Activated CD8-positive, alpha-beta T cell treated with anti-CD3 and anti-CD28 coated beads, Interleukin-2, amount 10 ng/mL, durations not matched to agents 7 days and 5 days (primary cell): ENCODE measurements at regions of chr20 and their contacts with region 1.

Region 1: GRCh38 chr20:49982346-49983122 is at the start of gene SNAI1:
- DNase-seq: peak; percentile 87
- ATAC-seq: peak; percentile 93
- H3K4me3 Mint-ChIP-seq: peak within 1 kb of the TSS; percentile 60
- H3K27ac Mint-ChIP-seq: peak within 1 kb of the TSS; percentile 25
- H3K4me1 Mint-ChIP-seq: peaks cover 31% of the 10 kb centered on the region
- H3K27me3 Mint-ChIP-seq: peaks cover 20% of the 10 kb centered on the region
- total RNA-seq, gene SNAI1: 0.37 to 0.47 TPM

Region 2: GRCh38 chr20:50012282-50013263 is 30.0 kb after region 1 on chr20:
- CTCF ChIA-PET with region 1: interaction called, 10 read pairs
- POLR2A ChIA-PET with region 1: no interaction called
- DNase-seq: no peak
- ATAC-seq: peak; percentile 48
- H3K4me3 Mint-ChIP-seq: no peak overlapping the region
- H3K27ac Mint-ChIP-seq: peak overlapping the region; percentile 37
- H3K4me1 Mint-ChIP-seq: peaks cover 14% of the 10 kb centered on the region
- H3K27me3 Mint-ChIP-seq: peaks cover 4% of the 10 kb centered on the region

Region 3: DNA sequence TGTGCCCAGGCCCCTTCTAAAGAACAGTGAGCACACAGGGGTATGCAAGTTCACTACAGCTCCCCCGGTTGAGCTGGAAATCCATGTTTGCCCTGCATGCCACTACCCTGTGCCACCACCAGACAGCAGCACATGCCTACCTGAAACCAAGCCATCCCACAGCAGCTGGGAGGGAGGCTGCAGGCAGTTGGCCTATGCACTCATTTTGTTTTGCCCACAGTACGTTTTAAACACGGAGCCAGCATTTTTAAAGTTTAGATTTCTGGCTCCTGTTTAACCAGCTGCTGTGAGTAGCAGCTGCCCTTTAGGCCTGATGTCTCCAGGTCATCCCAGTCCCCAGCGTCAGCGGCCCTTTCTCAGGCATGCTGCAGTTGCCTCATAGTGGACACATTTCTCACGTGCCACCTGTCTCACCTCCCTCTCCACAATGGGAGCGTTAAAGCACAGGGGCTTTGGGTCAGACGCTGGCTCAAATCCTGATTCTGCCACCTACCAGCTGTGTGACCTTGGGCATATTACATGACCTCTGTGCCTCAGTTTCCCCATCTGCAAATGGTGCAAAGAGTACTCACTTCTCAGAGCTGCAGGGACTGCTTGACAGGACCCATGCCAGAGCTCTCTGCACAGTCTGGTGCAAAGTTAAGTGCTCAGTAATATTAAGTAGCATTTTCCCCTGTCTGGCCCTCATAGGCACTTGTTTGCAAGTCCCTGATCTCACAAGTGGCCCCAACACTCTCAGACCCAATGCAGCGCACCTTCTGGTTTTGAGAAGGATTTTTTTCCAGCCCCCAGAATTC is 138.6 kb after region 1 on chr20:
- CTCF ChIA-PET with region 1: interaction called, 15 read pairs
- POLR2A ChIA-PET with region 1: no interaction called
- DNase-seq: peak; percentile 70
- ATAC-seq: peak; percentile 68
- H3K4me3 Mint-ChIP-seq: no peak overlapping the region
- H3K27ac Mint-ChIP-seq: no peak overlapping the region
- H3K4me1 Mint-ChIP-seq: peaks cover 7% of the 10 kb centered on the region
- H3K27me3 Mint-ChIP-seq: no peaks in the 10 kb centered on the region

Region 4: GRCh38 chr20:50172347-50173013 is 189.9 kb after region 1 on chr20:
- CTCF ChIA-PET with region 1: interaction called, 36 read pairs
- POLR2A ChIA-PET with region 1: no interaction called
- DNase-seq: no peak
- ATAC-seq: peak; percentile 52
- H3K4me3 Mint-ChIP-seq: no peak overlapping the region
- H3K27ac Mint-ChIP-seq: no peak overlapping the region
- H3K4me1 Mint-ChIP-seq: peaks cover 13% of the 10 kb centered on the region
- H3K27me3 Mint-ChIP-seq: peaks cover 13% of the 10 kb centered on the region